ENCODE measurements at regions of chr1 and their contacts with region 1.

Region 1: GRCh38 chr1:63537940-63538339 is 14.6 kb downstream of the EFCAB7 start:
- DNase-seq: no peak
- ATAC-seq: no peak
- H3K4me3 ChIP-seq: no peak overlapping the region
- H3K27ac ChIP-seq: no peak overlapping the region
- H3K4me1 ChIP-seq: no peaks in the 10 kb centered on the region
- H3K27me3 ChIP-seq: no peaks in the 10 kb centered on the region
- CTCF ChIP-seq: peak in 1 of 3 experiments; percentile 21; a peak in 2 of 6 replicates
- EP300 ChIP-seq: no peak
- POLR2A ChIP-seq: no peak
- RAD21 ChIP-seq: peak; percentile 38

Region 2: GRCh38 chr1:63189677-63190076 is 348.3 kb before region 1 on chr1:
- CTCF ChIA-PET with region 1: interaction called, 13 read pairs
- POLR2A ChIA-PET with region 1: no interaction called
- RAD21 ChIA-PET with region 1: no interaction called
- SMC1A ChIA-PET with region 1: no interaction called
- in situ Hi-C with region 1: no loop called
- intact Hi-C with region 1: no loop called
- DNase-seq: no peak
- ATAC-seq: no peak
- H3K4me3 ChIP-seq: no peak overlapping the region
- H3K27ac ChIP-seq: no peak overlapping the region
- H3K4me1 ChIP-seq: no peaks in the 10 kb centered on the region
- H3K27me3 ChIP-seq: 0 out of 4 replicates have a peak, but pooled peaks cover 0 to 2% of the 10 kb centered on the region in 2 experiments
- CTCF ChIP-seq: peak in 2 of 3 experiments; percentile 9 to 19; a peak in 2 of 6 replicates
- EP300 ChIP-seq: no peak
- POLR2A ChIP-seq: no peak
- RAD21 ChIP-seq: no peak

Region 3: GRCh38 chr1:63316984-63317816 is 220.7 kb before region 1 on chr1:
- CTCF ChIA-PET with region 1: interaction called, 3 read pairs
- POLR2A ChIA-PET with region 1: no interaction called
- RAD21 ChIA-PET with region 1: interaction called, 3 read pairs
- SMC1A ChIA-PET with region 1: no interaction called
- in situ Hi-C with region 1: no loop called
- intact Hi-C with region 1: loop called (anchors 5 kb)
- DNase-seq: no peak
- ATAC-seq: peak; percentile 96
- H3K4me3 ChIP-seq: peak overlapping the region; percentile 69
- H3K27ac ChIP-seq: no peak overlapping the region
- H3K4me1 ChIP-seq: no peaks in the 10 kb centered on the region
- H3K27me3 ChIP-seq: peaks cover 9 to 35% of the 10 kb centered on the region in 2 experiments
- CTCF ChIP-seq: peak; percentile 60 to 87 (median 66)
- EP300 ChIP-seq: no peak
- POLR2A ChIP-seq: no peak
- RAD21 ChIP-seq: peak; percentile 35; the same call in 1 of the 2 replicates

Region 4: DNA sequence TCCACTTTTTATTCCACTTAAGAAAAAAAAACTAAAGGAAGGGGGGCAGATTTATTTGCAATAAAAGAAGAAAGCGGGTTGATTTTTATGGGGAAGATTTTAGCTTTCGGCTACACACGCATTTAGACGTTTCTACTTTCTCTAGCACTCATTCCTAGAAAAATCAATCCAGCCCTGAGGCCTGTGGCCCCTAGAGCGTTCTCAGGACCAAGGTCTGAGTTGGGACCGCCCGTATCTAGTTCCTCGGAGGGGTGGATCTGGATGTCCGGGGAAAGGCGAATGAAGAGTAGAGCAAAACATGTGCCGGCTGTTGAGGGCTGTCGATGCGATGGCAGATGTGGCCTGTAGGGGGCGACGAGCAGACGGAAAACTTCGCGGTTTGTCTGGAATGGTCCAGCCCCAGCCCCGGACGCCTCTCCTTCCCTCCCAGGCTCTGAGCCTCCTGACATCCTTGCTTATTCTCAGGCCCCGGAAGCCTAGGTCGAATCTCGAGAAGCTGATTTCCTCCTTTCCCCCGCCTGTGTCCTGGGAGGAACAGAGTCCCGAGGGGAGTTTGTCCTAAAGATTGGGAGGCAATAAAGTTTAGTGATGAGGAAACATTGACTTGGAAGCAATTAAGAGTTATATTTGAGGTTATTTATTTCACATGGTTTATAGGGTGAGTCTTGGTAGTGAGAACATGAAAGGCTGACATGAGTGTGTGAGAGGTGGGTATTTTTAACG is 210.4 kb before region 1 on chr1:
- CTCF ChIA-PET with region 1: interaction called, 23 read pairs
- POLR2A ChIA-PET with region 1: no interaction called
- RAD21 ChIA-PET with region 1: interaction called, 8 read pairs
- SMC1A ChIA-PET with region 1: interaction called, 3 read pairs
- in situ Hi-C with region 1: no loop called
- intact Hi-C with region 1: no loop called
- DNase-seq: no peak
- ATAC-seq: peak; percentile 88
- H3K4me3 ChIP-seq: no peak overlapping the region
- H3K27ac ChIP-seq: no peak overlapping the region
- H3K4me1 ChIP-seq: no peaks in the 10 kb centered on the region; the same call in 1 of the 2 replicates
- H3K27me3 ChIP-seq: peaks cover 13 to 48% of the 10 kb centered on the region in 2 experiments
- CTCF ChIP-seq: peak; percentile 72 to 83 (median 80)
- EP300 ChIP-seq: no peak
- POLR2A ChIP-seq: no peak
- RAD21 ChIP-seq: no peak

Region 5: DNA sequence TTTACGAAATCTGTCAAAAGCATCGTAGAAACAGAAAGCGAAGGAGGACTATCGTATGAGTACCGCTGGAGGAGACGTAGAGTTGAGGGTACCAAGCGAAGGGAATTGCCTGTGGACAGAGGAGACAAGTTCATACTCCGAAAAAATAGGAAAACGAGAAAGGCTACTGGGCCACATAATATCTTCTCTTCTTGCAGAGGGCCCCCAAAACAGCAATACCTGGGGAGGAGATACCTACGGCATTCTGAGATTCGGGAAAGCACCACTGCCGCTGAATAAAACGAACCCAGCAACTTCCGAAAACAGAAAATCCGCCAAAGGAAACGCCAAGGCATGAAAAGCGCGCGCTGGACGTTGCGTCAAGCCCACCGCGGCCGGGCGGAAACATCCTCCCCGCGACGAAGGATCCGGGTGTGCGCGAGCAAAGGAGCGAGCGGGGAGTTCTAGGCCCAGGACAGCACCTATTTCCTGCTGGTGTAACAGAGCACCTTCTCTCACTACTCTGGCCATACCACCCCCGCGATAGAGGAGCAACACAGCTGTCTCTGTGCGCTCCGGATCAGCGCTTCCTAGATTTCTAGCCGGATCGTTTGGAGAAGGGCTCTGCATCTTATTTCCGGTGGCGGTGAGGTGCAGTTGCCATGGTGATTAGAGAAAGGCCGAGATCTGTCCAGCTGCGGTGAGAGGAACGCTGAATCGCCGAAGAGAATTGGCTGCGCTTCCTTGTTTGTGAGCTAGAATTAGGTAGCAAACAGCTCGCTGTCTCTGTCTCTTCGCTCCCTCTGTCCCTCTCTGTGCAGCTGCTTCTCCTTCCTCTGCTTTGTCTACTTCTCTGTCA is 14.8 kb before region 1 on chr1 and contains the starts of genes EFCAB7 and ITGB3BP:
- CTCF ChIA-PET with region 1: interaction called, 17 read pairs
- POLR2A ChIA-PET with region 1: interaction called, 3 read pairs
- RAD21 ChIA-PET with region 1: interaction called, 6 read pairs
- SMC1A ChIA-PET with region 1: interaction called, 14 read pairs
- in situ Hi-C with region 1: no loop called
- intact Hi-C with region 1: no loop called
- DNase-seq: peak; percentile 77
- ATAC-seq: peak; percentile 89
- H3K4me3 ChIP-seq: peak within 1 kb of the TSS; percentile 83
- H3K27ac ChIP-seq: peak within 1 kb of the TSS; percentile 97
- H3K4me1 ChIP-seq: peaks cover 6% of the 10 kb centered on the region
- H3K27me3 ChIP-seq: no peaks in the 10 kb centered on the region
- CTCF ChIP-seq: no peak
- EP300 ChIP-seq: peak; percentile 28 to 47; a peak in 1 of 4 replicates
- POLR2A ChIP-seq: peak; percentile 75
- RAD21 ChIP-seq: no peak
- polyA plus RNA-seq, gene EFCAB7: 5.1 to 5.7 TPM
- polyA plus RNA-seq, gene ITGB3BP: 82.4 to 86.2 TPM

Region 6: DNA sequence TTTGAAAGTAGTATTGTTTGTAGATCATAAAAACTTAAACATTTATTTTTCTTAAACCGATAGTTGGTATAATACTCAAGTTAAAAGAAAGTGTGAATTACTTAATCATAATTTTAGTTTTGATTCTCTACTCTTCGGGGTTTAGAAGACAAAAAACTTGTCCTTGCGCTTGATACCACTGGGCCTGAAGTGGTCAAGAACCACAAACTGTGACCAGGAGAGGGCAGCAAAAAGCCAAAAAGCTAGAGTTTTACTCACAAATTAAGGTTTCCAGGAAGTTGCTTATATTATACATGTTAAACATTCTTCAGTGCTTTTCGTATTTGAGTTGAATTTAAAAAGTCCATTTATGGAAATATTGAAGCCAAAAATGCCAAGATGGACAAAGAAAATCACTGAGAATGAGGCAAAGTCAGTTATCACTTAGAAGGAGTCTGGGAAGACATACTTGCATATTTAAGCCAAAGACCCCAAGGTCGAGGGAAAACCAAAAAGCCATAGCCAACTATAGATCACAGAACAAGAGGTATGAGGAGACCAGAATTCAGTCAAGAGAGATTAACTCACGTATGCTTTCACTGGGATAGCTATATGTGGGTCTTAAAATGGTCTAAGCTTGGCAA is 19.5 kb after region 1 on chr1:
- CTCF ChIA-PET with region 1: interaction called, 48 read pairs
- POLR2A ChIA-PET with region 1: no interaction called
- RAD21 ChIA-PET with region 1: interaction called, 4 read pairs
- SMC1A ChIA-PET with region 1: interaction called, 7 read pairs
- in situ Hi-C with region 1: no loop called
- intact Hi-C with region 1: no loop called
- DNase-seq: no peak
- ATAC-seq: peak; percentile 88
- H3K4me3 ChIP-seq: no peak overlapping the region
- H3K27ac ChIP-seq: no peak overlapping the region
- H3K4me1 ChIP-seq: no peaks in the 10 kb centered on the region
- H3K27me3 ChIP-seq: no peaks in the 10 kb centered on the region
- CTCF ChIP-seq: peak; percentile 45 to 64 (median 55)
- EP300 ChIP-seq: no peak
- POLR2A ChIP-seq: no peak
- RAD21 ChIP-seq: peak; percentile 63

Measured in GM12878 (cell line).